IMR-90 (cell line): ENCODE measurements at regions of chr19 and their contacts with region 1.

Region 1: DNA sequence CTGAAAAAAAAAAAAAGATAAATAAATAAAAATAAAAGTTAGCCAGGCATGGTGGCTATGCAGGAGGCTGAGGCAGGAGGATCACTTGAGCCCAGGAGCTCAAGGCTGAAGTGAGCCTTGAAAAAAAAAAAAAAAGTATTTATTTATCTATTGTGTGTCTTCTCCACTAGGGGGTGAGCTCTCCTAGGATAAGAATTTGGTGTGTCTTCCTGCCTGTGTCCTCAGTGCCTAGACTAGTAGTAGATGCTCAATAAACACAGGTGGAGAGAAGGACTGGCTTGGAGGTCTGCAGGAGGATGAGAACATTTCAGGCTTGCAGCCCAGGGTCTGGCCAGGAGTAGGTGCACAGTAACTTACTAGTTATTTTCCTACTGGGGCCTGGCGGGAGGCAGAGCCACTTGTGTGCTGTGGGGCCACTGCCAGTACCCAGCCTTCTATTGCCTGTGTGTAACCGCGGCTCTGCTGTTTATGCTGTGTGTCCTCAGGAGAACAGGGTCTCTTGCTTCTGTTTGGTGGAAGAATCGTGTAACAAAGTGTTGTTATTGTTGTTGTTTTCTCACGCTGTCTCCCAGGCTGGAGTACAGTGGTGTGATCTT is 5.4 kb downstream of the LMTK3 start:
- DNase-seq: peak; percentile 47
- ATAC-seq: peak; percentile 19; the same call in 1 of the 2 replicates
- H3K4me3 ChIP-seq: no peak overlapping the region
- H3K27ac ChIP-seq: no peak overlapping the region
- H3K4me1 ChIP-seq: peaks cover 3% of the 10 kb centered on the region; the same call in 1 of the 2 replicates
- H3K27me3 ChIP-seq: peaks cover 23% of the 10 kb centered on the region
- CTCF ChIP-seq: peak; percentile 73
- POLR2A ChIP-seq: no peak
- RAD21 ChIP-seq: peak; percentile 83

Region 2: GRCh38 chr19:48582168-48582567 is 75.9 kb after region 1 on chr19:
- CTCF ChIA-PET with region 1: interaction called, 24 read pairs
- POLR2A ChIA-PET with region 1: no interaction called
- dilution Hi-C with region 1: no loop called
- in situ Hi-C with region 1: loop called (anchors 5 kb)
- intact Hi-C with region 1: loop called (anchors 1 kb)
- DNase-seq: no peak
- ATAC-seq: no peak
- H3K4me3 ChIP-seq: no peak overlapping the region
- H3K27ac ChIP-seq: no peak overlapping the region
- H3K4me1 ChIP-seq: peaks cover 2% of the 10 kb centered on the region; the same call in 1 of the 2 replicates
- H3K27me3 ChIP-seq: no peaks in the 10 kb centered on the region
- CTCF ChIP-seq: no peak
- POLR2A ChIP-seq: no peak
- RAD21 ChIP-seq: no peak

Region 3: GRCh38 chr19:49641688-49642491 is 1135.7 kb after region 1 on chr19 and contains the start of gene SCAF1:
- CTCF ChIA-PET with region 1: no interaction called
- POLR2A ChIA-PET with region 1: no interaction called
- dilution Hi-C with region 1: no loop called
- in situ Hi-C with region 1: no loop called
- intact Hi-C with region 1: no loop called
- DNase-seq: peak; percentile 99
- ATAC-seq: peak; percentile 55
- H3K4me3 ChIP-seq: peak within 1 kb of the TSS; percentile 95
- H3K27ac ChIP-seq: peak within 1 kb of the TSS; percentile 99
- H3K4me1 ChIP-seq: peaks cover 7% of the 10 kb centered on the region
- H3K27me3 ChIP-seq: no peaks in the 10 kb centered on the region
- CTCF ChIP-seq: no peak
- POLR2A ChIP-seq: peak; percentile 92
- RAD21 ChIP-seq: no peak
- total RNA-seq, gene SCAF1: 2.2 and 3.1 TPM in 2 replicates